ENCODE measurements at regions of chr17 and their contacts with region 1.

Region 1: GRCh38 chr17:38428112-38428642 is at the start of gene ARHGAP23:
- DNase-seq: peak; percentile 79
- H3K4me3 Mint-ChIP-seq: peak within 1 kb of the TSS; percentile 76
- H3K27ac Mint-ChIP-seq: no peak within 1 kb of the TSS
- H3K4me1 Mint-ChIP-seq: peaks cover 7% of the 10 kb centered on the region
- H3K27me3 Mint-ChIP-seq: peaks cover 44% of the 10 kb centered on the region
- total RNA-seq, gene ARHGAP23: 0.19 and 0.61 TPM in 2 replicates

Region 2: DNA sequence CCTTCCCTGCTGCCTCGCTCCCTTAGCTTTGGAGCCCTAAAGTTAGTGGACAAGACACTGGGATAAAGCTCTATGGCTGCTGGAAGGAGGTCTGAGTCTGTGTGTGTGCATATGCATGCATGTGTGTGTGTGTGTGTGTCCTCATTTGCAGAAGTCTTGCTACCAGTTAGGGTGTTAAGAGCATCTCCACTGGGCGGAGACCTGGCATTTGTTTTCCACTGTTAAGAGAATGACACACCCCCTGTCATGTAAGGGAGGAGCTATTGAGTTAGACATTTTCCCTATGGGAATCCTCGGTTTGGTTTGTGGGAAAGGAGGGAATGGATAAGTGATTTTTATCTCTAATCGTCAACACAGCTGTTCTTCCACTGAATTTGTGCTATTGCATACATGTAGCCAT is 24.7 kb before region 1 on chr17:
- intact Hi-C with region 1: no loop called
- DNase-seq: no peak
- H3K4me3 Mint-ChIP-seq: no peak overlapping the region
- H3K27ac Mint-ChIP-seq: no peak overlapping the region
- H3K4me1 Mint-ChIP-seq: no peaks in the 10 kb centered on the region
- H3K27me3 Mint-ChIP-seq: no peaks in the 10 kb centered on the region

Region 3: DNA sequence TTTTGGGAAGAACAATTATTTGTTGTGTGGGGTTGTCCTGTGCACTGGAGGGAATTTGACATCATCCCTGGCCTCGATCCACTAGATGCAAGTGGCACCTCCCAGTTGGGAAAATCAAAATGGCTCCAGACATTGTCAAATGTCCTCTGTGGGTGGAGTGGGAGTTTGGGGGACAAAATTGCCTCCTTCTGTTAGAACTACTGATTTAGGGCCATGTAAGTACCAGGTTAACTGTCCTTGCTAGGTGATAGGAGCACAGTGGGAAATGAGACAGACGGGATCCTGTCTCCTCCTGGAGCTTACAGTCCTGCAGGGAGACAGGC is 56.9 kb after region 1 on chr17:
- intact Hi-C with region 1: loop called (anchors 1 kb)
- DNase-seq: no peak
- H3K4me3 Mint-ChIP-seq: no peak overlapping the region
- H3K27ac Mint-ChIP-seq: no peak overlapping the region
- H3K4me1 Mint-ChIP-seq: peaks cover 5% of the 10 kb centered on the region
- H3K27me3 Mint-ChIP-seq: peaks cover 10% of the 10 kb centered on the region

Measured in activated CD4-positive, alpha-beta T cell treated with anti-CD3 and anti-CD28 coated beads, Interleukin-2, amount 10 ng/mL, durations not matched to agents 24 days and 14 days (primary cell).